Calu3 (cell line): ENCODE measurements at regions of chr5 and their contacts with region 1.

Region 1: DNA sequence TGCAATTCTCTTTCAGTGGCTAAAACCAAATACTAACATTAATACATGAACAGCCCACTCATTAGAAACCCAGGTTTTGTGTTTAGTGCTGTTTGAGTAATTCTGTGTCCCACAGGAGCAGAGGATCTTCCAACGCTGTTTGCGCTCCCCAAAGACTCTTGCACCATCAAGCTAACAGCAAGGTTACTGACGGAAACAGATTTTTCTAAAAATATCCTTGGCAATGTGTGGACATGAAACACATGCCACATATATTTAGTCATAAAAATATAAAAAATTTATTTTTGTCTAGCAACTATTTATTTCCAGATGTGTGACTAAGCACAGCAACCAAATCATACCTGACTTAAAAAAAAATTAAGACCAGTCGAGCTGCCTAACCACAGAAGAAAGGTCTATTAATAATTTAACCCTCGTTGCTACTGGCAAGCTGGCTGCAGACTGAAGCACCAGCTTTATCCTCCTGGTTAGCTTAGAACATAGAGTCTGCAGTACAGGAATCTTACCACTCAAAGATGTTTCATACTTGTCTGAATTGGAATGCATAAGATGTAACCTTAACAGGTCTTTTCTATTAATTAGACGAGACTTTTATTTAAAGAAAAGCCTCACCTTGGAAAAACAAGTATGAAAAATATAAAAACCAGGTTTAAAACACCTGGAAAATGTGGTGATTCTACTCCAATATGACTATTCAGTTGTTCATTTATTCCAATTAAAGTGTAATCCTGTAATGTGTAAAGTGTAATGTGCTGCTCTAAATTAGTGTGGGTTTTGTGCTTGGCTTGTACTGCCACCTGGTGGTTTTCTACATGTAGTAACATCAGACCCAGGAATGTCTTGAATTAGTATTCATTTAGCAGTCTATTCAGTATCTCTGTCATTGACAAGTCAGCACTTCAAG is 272.5 kb downstream of the EPB41L4A start:
- DNase-seq: peak; percentile 69
- H3K4me3 Mint-ChIP-seq: no peak overlapping the region
- H3K27ac Mint-ChIP-seq: no peak overlapping the region
- H3K4me1 Mint-ChIP-seq: no peaks in the 10 kb centered on the region
- H3K27me3 Mint-ChIP-seq: no peaks in the 10 kb centered on the region
- CTCF ChIP-seq: peak; percentile 72

Region 2: DNA sequence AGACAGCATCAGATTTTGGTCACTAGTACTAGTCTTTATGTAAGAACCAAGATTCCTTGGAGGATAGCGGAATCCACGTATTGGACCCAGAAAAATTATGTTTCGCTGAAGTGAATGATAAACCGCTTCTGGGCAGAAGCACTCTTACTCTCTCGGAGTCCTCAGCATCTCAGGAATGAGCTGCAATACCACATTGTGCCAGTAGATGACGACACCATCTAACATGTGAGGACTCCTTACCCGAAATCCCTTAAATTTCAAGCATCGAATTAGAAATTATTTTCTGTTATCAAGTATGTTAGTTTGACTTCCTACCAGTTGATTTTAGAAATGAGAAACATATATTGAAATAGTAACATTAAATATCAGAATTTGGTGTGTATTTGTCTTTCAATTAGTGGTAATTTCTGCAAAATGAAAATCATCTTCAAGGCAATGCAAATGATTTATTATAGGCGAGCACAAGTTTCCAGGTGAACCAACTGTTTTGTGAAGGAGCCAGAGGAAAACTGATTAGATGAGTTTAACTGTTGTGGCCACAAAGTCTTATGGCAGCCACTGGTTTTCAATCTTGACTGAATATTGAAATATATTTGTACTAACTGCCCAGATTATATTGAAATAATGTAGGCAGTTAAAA is 988.4 kb before region 1 on chr5:
- CTCF ChIA-PET with region 1: no interaction called
- intact Hi-C with region 1: loop called (anchors 5 kb)
- DNase-seq: peak; percentile 83
- H3K4me3 Mint-ChIP-seq: no peak overlapping the region
- H3K27ac Mint-ChIP-seq: no peak overlapping the region
- H3K4me1 Mint-ChIP-seq: peaks cover 7% of the 10 kb centered on the region
- H3K27me3 Mint-ChIP-seq: no peaks in the 10 kb centered on the region
- CTCF ChIP-seq: peak; percentile 98

Region 3: DNA sequence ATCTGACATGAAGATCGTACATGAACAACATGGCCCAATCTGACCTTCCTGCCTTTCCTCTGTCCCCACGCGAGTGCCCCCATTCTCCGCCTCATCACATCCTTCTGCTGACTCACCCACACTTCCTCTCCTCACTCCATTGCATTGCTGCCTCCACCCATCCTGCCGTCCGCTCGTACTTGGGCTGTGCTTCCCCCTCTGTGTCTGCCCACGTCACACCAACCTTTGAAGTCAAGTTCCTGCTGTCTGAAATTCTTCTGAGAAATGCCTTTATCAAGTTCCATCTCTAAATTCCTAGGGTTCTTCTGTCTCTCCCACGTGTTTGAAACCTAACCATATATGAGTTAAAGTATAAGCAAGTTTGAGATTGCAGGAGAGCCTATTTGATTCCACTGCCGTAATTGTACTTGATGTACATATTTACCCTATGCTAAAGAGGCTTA is 616.3 kb before region 1 on chr5:
- CTCF ChIA-PET with region 1: interaction called, 7 read pairs
- intact Hi-C with region 1: loop called (anchors 5 kb)
- DNase-seq: peak; percentile 57
- H3K4me3 Mint-ChIP-seq: peak overlapping the region; percentile 31
- H3K27ac Mint-ChIP-seq: peak overlapping the region; percentile 68
- H3K4me1 Mint-ChIP-seq: peaks cover 11% of the 10 kb centered on the region
- H3K27me3 Mint-ChIP-seq: no peaks in the 10 kb centered on the region
- CTCF ChIP-seq: no peak

Region 4: GRCh38 chr5:111618623-111619271 is 527.8 kb before region 1 on chr5:
- CTCF ChIA-PET with region 1: no interaction called
- intact Hi-C with region 1: loop called (anchors 5 kb)
- DNase-seq: no peak
- H3K4me3 Mint-ChIP-seq: no peak overlapping the region
- H3K27ac Mint-ChIP-seq: no peak overlapping the region
- H3K4me1 Mint-ChIP-seq: no peaks in the 10 kb centered on the region
- H3K27me3 Mint-ChIP-seq: no peaks in the 10 kb centered on the region
- CTCF ChIP-seq: no peak

Region 5: DNA sequence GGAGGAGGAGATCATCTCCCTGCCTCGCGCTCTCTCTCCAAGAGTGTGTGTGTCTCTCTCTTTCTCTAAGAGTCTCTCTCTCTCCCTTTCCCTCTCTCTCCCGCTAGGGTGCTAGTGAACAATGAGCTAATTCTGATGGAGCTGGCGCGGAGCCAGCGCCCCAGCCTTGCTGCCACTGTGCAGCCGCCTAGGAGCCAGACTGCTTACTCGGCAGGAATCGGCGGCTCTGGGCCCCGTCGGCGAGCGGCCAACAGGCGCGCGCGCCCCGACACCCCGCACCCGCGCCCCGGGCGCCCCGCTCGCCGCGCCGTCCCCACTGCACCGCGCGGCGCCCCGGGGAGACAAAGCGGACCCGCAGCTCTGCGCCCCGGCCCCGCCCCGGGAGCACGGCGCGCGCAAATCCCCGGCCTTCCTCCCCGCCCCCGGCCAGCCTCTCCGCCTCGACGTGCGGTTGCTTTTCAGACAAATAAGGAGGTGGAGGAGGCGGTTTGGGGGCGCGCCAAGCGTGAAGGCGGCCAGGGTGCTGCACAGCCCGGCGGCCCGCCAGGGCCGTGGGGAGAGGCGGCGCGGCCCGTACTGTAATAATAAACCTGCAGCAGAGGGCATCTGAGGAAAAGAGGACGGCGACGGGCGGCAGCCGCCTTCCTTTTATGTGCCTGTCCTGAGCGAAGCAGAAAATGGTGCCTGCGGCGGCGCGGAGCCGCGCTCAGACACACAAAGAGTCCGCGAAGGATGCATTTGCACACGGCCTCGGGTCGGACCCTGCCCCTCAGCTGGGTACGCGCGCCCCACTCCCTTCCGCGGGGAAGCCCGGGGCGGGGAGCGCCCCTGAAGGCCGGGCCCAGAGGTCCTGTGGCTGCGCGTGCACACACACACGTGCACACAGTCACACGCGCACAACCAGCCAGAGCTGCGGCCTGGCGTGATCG is 389.0 kb before region 1 on chr5:
- CTCF ChIA-PET with region 1: interaction called, 5 read pairs
- intact Hi-C with region 1: loop called (anchors 5 kb)
- DNase-seq: peak; percentile 93
- H3K4me3 Mint-ChIP-seq: peak overlapping the region; percentile 60
- H3K27ac Mint-ChIP-seq: peak overlapping the region; percentile 72
- H3K4me1 Mint-ChIP-seq: peaks cover 8% of the 10 kb centered on the region
- H3K27me3 Mint-ChIP-seq: no peaks in the 10 kb centered on the region
- CTCF ChIP-seq: peak; percentile 38